ENCODE measurements at regions of chr2 and their contacts with region 1.

Region 1: DNA sequence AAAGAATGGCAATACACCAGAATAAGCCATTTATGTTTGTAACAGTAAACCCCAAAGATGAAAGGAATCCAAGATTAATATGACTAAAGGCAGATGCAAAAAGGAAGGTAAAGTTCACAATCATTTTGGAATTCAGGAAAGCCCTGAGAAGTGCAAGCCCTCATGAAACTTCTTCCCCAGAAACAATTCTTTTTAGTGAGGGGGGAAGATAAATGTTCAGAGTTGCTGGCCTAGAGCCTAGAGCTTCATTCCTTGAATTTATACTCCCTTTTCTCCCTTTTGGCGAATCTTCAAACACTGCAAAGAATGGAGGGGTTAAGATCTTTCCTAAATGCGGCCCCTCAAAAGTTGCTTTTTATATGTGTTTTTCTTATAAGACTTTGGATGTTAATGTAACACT is 368.8 kb downstream of the MEIS1 start:
- DNase-seq: no peak
- H3K4me3 ChIP-seq: no peak overlapping the region
- H3K27me3 ChIP-seq: no peaks in the 10 kb centered on the region
- CTCF ChIP-seq: no peak

Region 2: DNA sequence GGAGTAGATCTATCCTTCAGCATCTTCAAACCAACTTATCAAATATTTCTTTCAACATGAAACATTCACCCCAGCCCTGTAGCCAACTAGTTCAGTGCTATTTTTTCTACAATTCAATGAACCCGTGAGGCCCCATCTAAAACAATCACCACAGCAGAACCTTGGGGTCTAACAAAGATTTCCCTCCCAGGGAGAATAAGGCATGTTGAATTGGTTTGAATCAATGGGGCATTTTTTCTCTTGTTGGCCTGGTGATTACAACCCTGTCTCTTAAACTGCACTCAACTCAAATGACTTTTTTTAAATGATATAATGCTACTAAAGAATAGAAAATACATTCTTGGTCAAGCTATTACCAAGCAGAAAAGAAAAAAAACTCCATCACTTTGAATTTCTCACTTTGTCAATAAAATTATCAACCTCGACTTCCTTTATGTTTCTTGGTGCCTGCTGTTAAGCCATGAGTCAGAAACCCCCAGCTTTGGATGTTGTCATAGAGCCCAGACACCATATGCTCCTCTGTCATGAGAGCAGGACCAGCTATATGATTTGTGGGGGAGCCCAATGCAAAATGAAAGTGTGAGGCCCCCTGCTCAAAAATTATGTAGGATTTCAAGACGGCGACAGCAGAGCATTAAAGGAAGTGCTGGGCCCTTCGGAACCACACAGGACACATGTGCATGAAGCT is 86.4 kb before region 1 on chr2:
- CTCF ChIA-PET with region 1: no interaction called
- POLR2A ChIA-PET with region 1: no interaction called
- DNase-seq: no peak
- H3K4me3 ChIP-seq: no peak overlapping the region
- H3K27me3 ChIP-seq: no peaks in the 10 kb centered on the region
- CTCF ChIP-seq: no peak

Region 3: DNA sequence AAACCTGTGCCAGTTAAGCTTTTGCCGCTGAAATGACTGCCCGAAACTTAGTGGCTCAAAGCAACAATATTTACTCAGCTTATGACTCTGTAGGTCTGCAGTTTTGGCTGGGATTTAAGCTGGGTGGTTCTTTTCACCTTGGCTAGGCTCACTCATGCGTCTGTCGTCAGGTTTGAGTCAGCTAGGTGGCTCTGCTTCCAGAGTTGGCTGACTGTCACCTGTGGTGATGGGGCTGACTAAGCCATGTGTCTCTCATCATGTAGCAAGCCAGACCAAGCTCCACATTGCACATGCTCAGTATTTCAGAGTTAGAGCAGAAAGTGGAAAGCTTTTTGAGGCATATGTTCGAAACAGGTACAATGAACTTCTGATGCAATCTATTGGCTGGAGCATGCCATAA is 14.0 kb before region 1 on chr2:
- CTCF ChIA-PET with region 1: interaction called, 10 read pairs
- POLR2A ChIA-PET with region 1: no interaction called
- DNase-seq: no peak
- H3K4me3 ChIP-seq: no peak overlapping the region
- H3K27me3 ChIP-seq: no peaks in the 10 kb centered on the region
- CTCF ChIP-seq: no peak

Region 4: GRCh38 chr2:66985906-66986305 is 182.2 kb after region 1 on chr2:
- CTCF ChIA-PET with region 1: no interaction called
- POLR2A ChIA-PET with region 1: interaction called, 19 read pairs
- DNase-seq: no peak
- H3K4me3 ChIP-seq: no peak overlapping the region
- H3K27me3 ChIP-seq: no peaks in the 10 kb centered on the region
- CTCF ChIP-seq: no peak